HEK293 (cell line): ENCODE measurements at regions of chr9 and their contacts with region 1.

Region 1: GRCh38 chr9:123349691-123350480 is 6.1 kb upstream of the CRB2 start:
- H3K4me3 ChIP-seq: peak overlapping the region; percentile 10; the same call in 1 of the 2 replicates
- H3K27ac ChIP-seq: no peak overlapping the region
- H3K4me1 ChIP-seq: no peaks in the 10 kb centered on the region
- CTCF ChIP-seq: peak; percentile 91

Region 2: DNA sequence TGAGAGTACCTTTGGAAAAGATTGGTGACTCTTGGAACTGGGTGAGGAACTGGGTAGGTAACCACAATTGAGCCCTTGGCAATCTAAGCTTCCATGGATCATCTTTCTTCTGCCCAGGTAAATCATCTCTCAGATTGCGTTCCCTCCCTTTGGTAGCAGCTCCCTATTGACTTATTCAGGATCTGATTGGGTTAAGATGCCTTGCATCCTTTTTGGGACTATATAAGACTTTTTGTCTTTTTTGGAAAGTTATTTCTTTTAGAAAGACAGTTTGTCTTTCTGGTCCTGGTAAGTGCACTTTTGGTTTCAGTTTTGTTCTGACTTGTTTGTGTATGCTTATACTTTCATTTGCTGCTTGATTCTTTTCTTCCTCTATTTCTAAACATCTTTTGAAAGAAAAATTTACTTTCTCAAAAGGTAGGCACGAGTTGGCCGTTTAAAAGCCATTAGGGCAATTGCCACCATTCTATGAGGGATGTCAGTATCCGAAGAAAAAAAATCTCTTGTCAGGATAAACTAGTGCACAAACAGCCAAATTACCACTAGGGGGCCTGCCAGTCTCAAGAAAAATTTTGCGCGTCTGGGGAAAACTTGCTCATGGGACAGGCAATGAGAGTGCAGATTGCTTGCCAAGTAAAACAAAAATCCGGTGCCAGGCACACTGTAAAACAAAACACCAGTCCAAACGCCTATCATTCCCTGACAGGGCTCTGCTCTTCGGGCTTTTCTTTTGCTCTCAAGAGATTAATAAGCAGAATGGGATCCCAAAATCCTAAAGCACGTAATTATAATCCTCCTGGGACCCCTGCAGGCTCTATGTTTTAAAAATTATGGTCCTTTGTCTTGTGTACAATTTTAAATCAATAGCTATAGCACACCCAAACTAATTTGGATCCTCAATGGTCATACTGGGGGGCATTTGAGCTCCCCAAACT is 885.0 kb before region 1 on chr9:
- CTCF ChIA-PET with region 1: interaction called, 13 read pairs
- POLR2A ChIA-PET with region 1: no interaction called
- H3K4me3 ChIP-seq: no peak overlapping the region; the same call in 1 of the 2 replicates
- H3K27ac ChIP-seq: no peak overlapping the region
- H3K4me1 ChIP-seq: no peaks in the 10 kb centered on the region
- CTCF ChIP-seq: peak; percentile 36; the same call in 1 of the 2 replicates

Region 3: GRCh38 chr9:123081824-123082223 is 268.1 kb before region 1 on chr9:
- CTCF ChIA-PET with region 1: interaction called, 83 read pairs
- POLR2A ChIA-PET with region 1: no interaction called
- H3K4me3 ChIP-seq: no peak overlapping the region
- H3K27ac ChIP-seq: no peak overlapping the region
- H3K4me1 ChIP-seq: no peaks in the 10 kb centered on the region
- CTCF ChIP-seq: 0 out of 2 replicates have a peak, but pooled peaks have one; percentile 11

Region 4: GRCh38 chr9:123102375-123103110 is 247.3 kb before region 1 on chr9:
- CTCF ChIA-PET with region 1: interaction called, 13 read pairs
- POLR2A ChIA-PET with region 1: no interaction called
- H3K4me3 ChIP-seq: no peak overlapping the region
- H3K27ac ChIP-seq: no peak overlapping the region
- H3K4me1 ChIP-seq: no peaks in the 10 kb centered on the region
- CTCF ChIP-seq: 0 out of 2 replicates have a peak, but pooled peaks have one; percentile 18

Region 5: GRCh38 chr9:123360161-123361085 is 10.5 kb after region 1 on chr9:
- CTCF ChIA-PET with region 1: interaction called, 13 read pairs
- POLR2A ChIA-PET with region 1: interaction called, 4 read pairs
- H3K4me3 ChIP-seq: no peak overlapping the region
- H3K27ac ChIP-seq: no peak overlapping the region
- H3K4me1 ChIP-seq: no peaks in the 10 kb centered on the region
- CTCF ChIP-seq: no peak

Region 6: DNA sequence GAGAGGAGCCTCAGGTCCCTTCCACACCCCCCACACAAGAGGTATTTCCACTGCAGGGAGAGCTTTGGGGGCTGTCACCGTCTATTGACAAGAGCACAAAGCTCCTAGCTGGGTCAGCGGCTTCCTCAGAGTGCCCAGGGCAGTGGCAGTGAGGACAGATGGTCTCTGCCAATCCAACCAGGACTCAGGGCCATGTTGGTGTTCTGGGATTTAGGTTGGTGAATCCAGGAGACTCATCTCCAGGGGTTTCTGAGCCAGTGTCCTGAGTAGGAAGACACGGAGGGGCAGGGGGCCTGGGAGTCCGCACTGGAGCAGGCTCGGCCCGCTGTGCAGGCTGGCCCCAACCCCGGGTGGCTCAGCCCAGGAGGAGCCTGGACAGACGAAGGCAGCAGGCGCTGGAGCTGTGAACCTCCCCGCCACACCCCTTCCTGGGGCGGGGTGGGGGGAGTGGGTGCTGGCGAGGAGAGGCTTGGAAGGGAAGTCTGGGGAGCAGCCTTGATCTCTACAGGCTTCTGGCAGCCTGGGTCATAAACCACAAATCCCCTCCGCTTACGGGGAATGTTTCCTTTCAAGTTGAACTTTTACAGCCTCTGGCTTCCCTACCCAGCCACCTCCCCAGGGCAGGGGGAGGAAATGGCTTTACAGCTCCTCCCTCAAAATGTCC is 25.7 kb after region 1 on chr9:
- CTCF ChIA-PET with region 1: interaction called, 22 read pairs
- POLR2A ChIA-PET with region 1: interaction called, 3 read pairs
- H3K4me3 ChIP-seq: no peak overlapping the region
- H3K27ac ChIP-seq: no peak overlapping the region
- H3K4me1 ChIP-seq: no peaks in the 10 kb centered on the region
- CTCF ChIP-seq: no peak

Region 7: GRCh38 chr9:123389070-123389469 is 39.2 kb after region 1 on chr9:
- CTCF ChIA-PET with region 1: interaction called, 106 read pairs
- POLR2A ChIA-PET with region 1: interaction called, 3 read pairs
- H3K4me3 ChIP-seq: no peak overlapping the region
- H3K27ac ChIP-seq: no peak overlapping the region
- H3K4me1 ChIP-seq: no peaks in the 10 kb centered on the region
- CTCF ChIP-seq: no peak